ENCODE measurements at regions of chr18 and their contacts with region 1.

Region 1: GRCh38 chr18:76426737-76427305 is 68.2 kb downstream of the ZNF516 start:
- DNase-seq: peak in 1 of 2 experiments; percentile 93
- H3K4me3 ChIP-seq: no peak overlapping the region
- H3K27ac ChIP-seq: no peak overlapping the region
- H3K4me1 ChIP-seq: peaks cover 0 to 14% (median 8%) of the 10 kb centered on the region in 4 experiments; a peak in 4 of 7 replicates
- H3K27me3 ChIP-seq: no peaks in the 10 kb centered on the region; a peak in 1 of 7 replicates
- CTCF ChIP-seq: peak; percentile 82 to 95 (median 91)
- EP300 ChIP-seq: no peak
- POLR2A ChIP-seq: no peak
- RAD21 ChIP-seq: peak; percentile 85 to 87

Region 2: DNA sequence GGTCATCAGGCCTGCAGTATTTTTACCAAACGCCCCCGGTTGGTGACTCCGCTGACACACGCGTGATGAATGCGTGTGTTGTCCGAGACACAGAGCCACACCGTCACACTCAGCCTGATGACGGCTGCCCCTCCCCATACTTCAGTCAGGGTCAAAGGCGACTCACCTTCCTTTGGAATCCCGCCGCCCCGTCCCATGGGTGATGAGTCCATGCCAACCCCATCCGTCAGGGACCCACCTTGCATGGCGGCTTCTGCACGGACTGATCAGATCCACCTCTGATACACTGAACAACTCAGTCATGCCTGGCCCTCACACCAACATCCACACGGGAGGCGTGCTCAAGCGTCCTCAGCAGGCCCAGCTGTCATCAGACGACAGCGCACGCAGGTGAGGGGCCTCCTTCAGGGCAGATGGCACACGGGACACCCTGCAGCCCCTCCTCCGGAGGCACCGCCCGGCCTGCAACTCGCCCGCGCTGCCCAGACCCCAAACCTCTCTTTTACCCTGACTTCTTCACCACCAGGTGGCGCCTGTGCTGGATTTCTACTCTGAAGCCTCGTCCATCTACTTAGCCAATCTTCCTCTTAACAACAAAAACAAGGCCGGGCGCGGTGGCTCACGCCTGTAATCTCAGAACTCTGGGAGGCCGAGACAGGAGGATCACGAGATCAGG is 21.0 kb before region 1 on chr18:
- CTCF ChIA-PET with region 1: interaction called, 33 read pairs
- POLR2A ChIA-PET with region 1: interaction called, 3 read pairs
- DNase-seq: peak; percentile 43 to 87
- H3K4me3 ChIP-seq: no peak overlapping the region
- H3K27ac ChIP-seq: no peak overlapping the region
- H3K4me1 ChIP-seq: no peaks in the 10 kb centered on the region
- H3K27me3 ChIP-seq: no peaks in the 10 kb centered on the region
- CTCF ChIP-seq: peak; percentile 65 to 83 (median 66)
- EP300 ChIP-seq: no peak
- POLR2A ChIP-seq: no peak
- RAD21 ChIP-seq: peak; percentile 63 to 73

Region 3: GRCh38 chr18:76410660-76411417 is 16.0 kb before region 1 on chr18:
- CTCF ChIA-PET with region 1: interaction called, 27 read pairs
- POLR2A ChIA-PET with region 1: interaction called, 3 read pairs
- DNase-seq: no peak
- H3K4me3 ChIP-seq: no peak overlapping the region
- H3K27ac ChIP-seq: no peak overlapping the region
- H3K4me1 ChIP-seq: peaks cover 0 to 6% (median 1%) of the 10 kb centered on the region in 4 experiments; a peak in 2 of 7 replicates
- H3K27me3 ChIP-seq: no peaks in the 10 kb centered on the region
- CTCF ChIP-seq: no peak
- EP300 ChIP-seq: no peak
- POLR2A ChIP-seq: no peak
- RAD21 ChIP-seq: no peak

Region 4: DNA sequence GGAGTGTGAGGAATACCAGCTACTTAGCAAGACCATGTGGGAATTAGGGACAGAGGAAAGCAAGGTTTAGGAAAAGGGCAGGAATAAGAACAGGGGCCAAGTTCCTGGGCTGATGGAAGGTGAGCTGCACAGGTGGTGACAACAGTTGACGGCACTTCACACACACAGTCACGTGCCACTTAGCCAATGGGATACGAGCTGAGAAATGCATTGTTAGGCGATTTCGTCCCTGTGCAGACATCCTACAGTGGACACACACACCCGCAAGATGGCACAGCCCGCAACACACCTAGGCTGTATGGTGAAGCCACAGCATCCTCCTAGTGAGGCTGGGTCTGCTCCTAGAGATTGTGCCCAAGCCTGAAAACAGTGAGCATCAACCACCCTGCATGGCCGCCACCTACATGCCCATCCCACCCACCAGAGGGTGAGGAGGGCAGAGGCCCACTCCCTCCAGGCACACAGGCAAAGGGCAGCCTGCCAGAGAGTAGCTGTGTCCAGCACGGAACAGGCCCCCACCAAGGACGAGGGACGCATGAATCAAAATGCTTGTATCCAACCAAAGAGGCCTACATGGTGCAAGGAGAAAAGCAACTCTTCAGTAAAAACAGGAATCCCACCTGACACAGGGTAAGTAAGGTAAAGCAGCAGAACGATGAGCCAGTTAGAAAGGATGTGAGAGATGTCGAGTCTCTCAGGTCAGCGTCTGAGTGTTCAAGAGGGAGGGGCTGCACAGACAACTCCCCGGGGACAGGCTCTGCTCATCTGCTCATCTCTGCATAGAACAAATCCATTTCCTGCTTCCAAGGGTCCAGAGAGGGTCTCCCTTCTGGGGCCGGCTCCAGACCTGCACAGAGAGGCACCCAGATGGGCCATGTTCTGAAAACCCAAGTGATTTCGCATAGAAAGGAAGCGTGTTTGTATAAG is 17.0 kb after region 1 on chr18:
- CTCF ChIA-PET with region 1: interaction called, 13 read pairs
- POLR2A ChIA-PET with region 1: no interaction called
- DNase-seq: no peak
- H3K4me3 ChIP-seq: no peak overlapping the region
- H3K27ac ChIP-seq: no peak overlapping the region
- H3K4me1 ChIP-seq: no peaks in the 10 kb centered on the region; a peak in 2 of 7 replicates
- H3K27me3 ChIP-seq: no peaks in the 10 kb centered on the region
- CTCF ChIP-seq: no peak
- EP300 ChIP-seq: no peak
- POLR2A ChIP-seq: no peak
- RAD21 ChIP-seq: no peak

Measured in H1 (cell line).